Left ventricle myocardium superior (tissue), 1 donor: ENCODE measurements at regions of chr6 and their contacts with region 1.

Region 1: GRCh38 chr6:56359201-56359899 is 112.0 kb upstream of the COL21A1 start:
- DNase-seq: no peak
- ATAC-seq: peak; percentile 81

Region 2: GRCh38 chr6:56445818-56446217 is 86.5 kb after region 1 on chr6:
- intact Hi-C with region 1: no loop called
- DNase-seq: peak; percentile 32
- ATAC-seq: peak; percentile 80

Region 3: GRCh38 chr6:56595490-56596122 is 236.3 kb after region 1 on chr6:
- intact Hi-C with region 1: loop called (anchors 5 kb)
- DNase-seq: no peak
- ATAC-seq: peak; percentile 71

Region 4: DNA sequence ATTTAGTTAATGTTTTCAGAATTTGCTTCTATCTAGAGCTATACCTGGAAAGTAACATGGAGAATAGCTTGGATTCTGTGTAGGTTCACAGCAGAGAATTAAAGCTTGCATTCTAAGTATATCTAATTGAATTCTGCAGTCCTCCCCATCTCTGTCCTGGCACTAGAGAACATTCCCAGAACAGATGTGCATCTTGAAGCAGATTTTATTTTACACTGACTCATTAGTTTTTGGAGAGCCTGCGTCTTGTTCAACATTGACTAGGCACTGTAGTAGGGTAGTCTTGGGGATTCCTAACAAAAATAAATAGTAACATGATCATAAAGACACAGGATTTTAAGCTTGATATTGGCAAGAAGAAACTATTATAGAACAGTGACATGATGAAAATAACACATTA is 776.5 kb after region 1 on chr6:
- intact Hi-C with region 1: no loop called
- DNase-seq: no peak
- ATAC-seq: no peak